GM12878 (cell line): ENCODE measurements at regions of chrX and their contacts with region 1.

Region 1: DNA sequence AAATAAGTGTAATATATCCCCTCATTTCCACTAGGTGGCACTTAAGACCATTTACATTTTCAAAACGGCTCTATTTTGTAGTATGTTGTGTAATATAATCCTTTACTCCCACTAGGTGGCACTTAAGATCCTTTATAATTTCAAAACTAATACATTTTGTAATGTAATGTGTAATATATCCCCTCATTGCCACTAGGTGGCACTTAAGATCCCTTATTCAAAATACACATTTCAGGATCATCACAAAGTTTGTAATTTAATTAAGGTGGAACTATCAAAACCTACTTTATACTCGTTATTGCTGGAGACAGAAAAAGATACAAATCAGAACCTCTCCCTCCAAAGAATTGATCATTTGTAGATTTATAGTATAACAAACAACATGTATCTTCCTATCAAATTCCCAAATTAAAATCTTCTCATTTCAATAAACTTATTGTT is 132.5 kb downstream of the ARHGAP6 start:
- DNase-seq: peak; percentile 61
- ATAC-seq: peak; percentile 93
- H3K4me3 ChIP-seq: no peak overlapping the region
- H3K27ac ChIP-seq: no peak overlapping the region
- H3K4me1 ChIP-seq: no peaks in the 10 kb centered on the region
- H3K27me3 ChIP-seq: no peaks in the 10 kb centered on the region
- CTCF ChIP-seq: peak; percentile 41 to 98 (median 83); a peak in 4 of 6 replicates
- EP300 ChIP-seq: no peak
- POLR2A ChIP-seq: no peak
- RAD21 ChIP-seq: peak; percentile 72

Region 2: DNA sequence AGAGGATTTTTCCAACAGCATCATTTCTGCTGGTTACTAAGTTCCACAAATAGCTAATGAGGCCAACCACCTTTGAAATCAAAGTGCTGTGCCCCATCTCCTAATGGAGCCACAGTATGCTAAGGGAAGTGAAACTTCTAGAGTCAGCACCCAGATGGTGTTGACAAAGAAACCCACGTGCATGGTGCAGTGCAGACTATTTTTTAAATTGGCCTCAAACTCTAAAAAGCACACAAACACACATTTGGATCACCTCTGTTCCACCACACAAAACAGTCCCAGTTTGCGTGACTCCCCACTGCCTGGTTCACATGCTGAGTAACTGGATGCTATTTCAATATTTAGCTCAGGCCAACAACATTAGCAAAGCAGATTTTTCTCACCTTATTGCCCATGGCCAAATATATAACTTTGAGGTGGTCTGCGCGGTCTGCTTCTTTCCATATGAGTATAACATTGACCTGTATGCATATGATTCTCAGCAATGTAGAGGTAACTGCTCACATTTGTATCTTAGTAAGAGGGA is 170.1 kb before region 1 on chrX:
- CTCF ChIA-PET with region 1: interaction called, 12 read pairs
- POLR2A ChIA-PET with region 1: no interaction called
- RAD21 ChIA-PET with region 1: no interaction called
- SMC1A ChIA-PET with region 1: no interaction called
- in situ Hi-C with region 1: no loop called
- intact Hi-C with region 1: no loop called
- DNase-seq: peak; percentile 67
- ATAC-seq: peak; percentile 99
- H3K4me3 ChIP-seq: no peak overlapping the region
- H3K27ac ChIP-seq: peak overlapping the region; percentile 22; the same call in 1 of the 2 replicates
- H3K4me1 ChIP-seq: no peaks in the 10 kb centered on the region
- H3K27me3 ChIP-seq: no peaks in the 10 kb centered on the region
- CTCF ChIP-seq: no peak; a peak in 1 of 6 replicates
- EP300 ChIP-seq: peak; percentile 79 to 91
- POLR2A ChIP-seq: no peak
- RAD21 ChIP-seq: no peak

Region 3: DNA sequence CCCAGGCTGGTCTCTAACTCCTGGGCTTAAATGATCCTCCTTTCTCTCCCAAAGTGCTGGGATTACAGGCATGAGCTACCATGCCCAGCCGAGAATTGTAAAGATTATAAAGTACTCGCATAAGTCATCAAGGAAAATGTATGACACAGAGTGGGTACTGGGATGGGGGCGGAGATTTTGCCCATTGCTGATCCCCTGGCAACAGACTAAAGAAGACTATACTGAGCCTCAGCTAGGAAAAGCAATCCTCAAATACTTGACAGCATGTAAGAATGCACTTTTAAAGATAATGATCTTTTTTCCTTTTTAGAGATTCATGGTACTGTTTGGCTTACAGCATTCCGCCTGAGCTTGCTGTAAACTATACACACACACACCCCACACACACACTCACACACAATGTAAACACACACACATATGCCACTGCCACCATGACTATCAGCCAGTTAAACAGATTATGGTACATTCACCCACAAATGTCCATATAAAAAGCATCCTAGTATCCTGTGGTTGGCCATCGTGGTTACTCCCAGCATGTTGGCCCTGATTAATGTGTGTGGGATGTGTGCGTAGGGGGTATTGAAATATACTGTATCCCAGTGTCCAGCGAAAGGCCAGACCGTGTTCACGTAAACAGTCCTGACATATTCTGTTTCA is 127.0 kb before region 1 on chrX:
- CTCF ChIA-PET with region 1: no interaction called
- POLR2A ChIA-PET with region 1: no interaction called
- RAD21 ChIA-PET with region 1: no interaction called
- SMC1A ChIA-PET with region 1: no interaction called
- in situ Hi-C with region 1: no loop called
- intact Hi-C with region 1: no loop called
- DNase-seq: no peak
- ATAC-seq: no peak
- H3K4me3 ChIP-seq: no peak overlapping the region
- H3K27ac ChIP-seq: no peak overlapping the region
- H3K4me1 ChIP-seq: no peaks in the 10 kb centered on the region
- H3K27me3 ChIP-seq: no peaks in the 10 kb centered on the region
- CTCF ChIP-seq: no peak
- EP300 ChIP-seq: no peak
- POLR2A ChIP-seq: no peak
- RAD21 ChIP-seq: no peak

Region 4: GRCh38 chrX:11724122-11725017 is 191.1 kb after region 1 on chrX:
- CTCF ChIA-PET with region 1: interaction called, 14 read pairs
- POLR2A ChIA-PET with region 1: no interaction called
- RAD21 ChIA-PET with region 1: interaction called, 4 read pairs
- SMC1A ChIA-PET with region 1: interaction called, 6 read pairs
- in situ Hi-C with region 1: no loop called
- intact Hi-C with region 1: loop called (anchors 1 kb)
- DNase-seq: no peak
- ATAC-seq: peak; percentile 85
- H3K4me3 ChIP-seq: no peak overlapping the region
- H3K27ac ChIP-seq: no peak overlapping the region
- H3K4me1 ChIP-seq: no peaks in the 10 kb centered on the region
- H3K27me3 ChIP-seq: no peaks in the 10 kb centered on the region
- CTCF ChIP-seq: peak; percentile 63 to 68 (median 64)
- EP300 ChIP-seq: no peak
- POLR2A ChIP-seq: no peak
- RAD21 ChIP-seq: peak; percentile 64

Region 5: GRCh38 chrX:11787564-11787963 is 254.3 kb after region 1 on chrX:
- CTCF ChIA-PET with region 1: interaction called, 12 read pairs
- POLR2A ChIA-PET with region 1: no interaction called
- RAD21 ChIA-PET with region 1: interaction called, 6 read pairs
- SMC1A ChIA-PET with region 1: no interaction called
- in situ Hi-C with region 1: no loop called
- intact Hi-C with region 1: no loop called
- DNase-seq: no peak
- ATAC-seq: no peak
- H3K4me3 ChIP-seq: no peak overlapping the region
- H3K27ac ChIP-seq: no peak overlapping the region
- H3K4me1 ChIP-seq: peaks cover 20% of the 10 kb centered on the region
- H3K27me3 ChIP-seq: no peaks in the 10 kb centered on the region
- CTCF ChIP-seq: peak; percentile 22 to 60 (median 33); a peak in 5 of 6 replicates
- EP300 ChIP-seq: no peak
- POLR2A ChIP-seq: no peak
- RAD21 ChIP-seq: peak; percentile 46

Region 6: DNA sequence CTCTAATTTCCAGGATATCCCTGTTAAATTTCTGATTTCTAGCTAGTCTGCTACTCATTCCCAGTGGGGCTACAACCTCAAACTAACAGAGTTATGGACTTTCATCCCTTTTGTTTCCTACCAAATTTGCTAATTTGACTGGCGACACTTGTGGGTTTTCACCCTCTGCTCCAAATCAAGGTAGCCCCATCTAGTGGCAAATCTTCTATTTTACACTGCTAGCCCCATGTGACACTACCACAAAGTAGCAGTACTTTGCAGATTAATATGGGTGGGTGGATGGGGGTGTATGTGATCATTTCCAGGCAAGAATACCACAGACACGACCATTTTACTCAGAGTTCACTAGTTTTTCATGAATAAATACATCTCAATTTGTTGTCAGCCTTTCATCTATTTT is 375.1 kb after region 1 on chrX:
- CTCF ChIA-PET with region 1: interaction called, 8 read pairs
- POLR2A ChIA-PET with region 1: no interaction called
- RAD21 ChIA-PET with region 1: interaction called, 3 read pairs
- SMC1A ChIA-PET with region 1: interaction called, 12 read pairs
- in situ Hi-C with region 1: loop called (anchors 5 kb)
- intact Hi-C with region 1: loop called (anchors 1 kb)
- DNase-seq: peak; percentile 25
- ATAC-seq: peak; percentile 99
- H3K4me3 ChIP-seq: no peak overlapping the region
- H3K27ac ChIP-seq: no peak overlapping the region
- H3K4me1 ChIP-seq: no peaks in the 10 kb centered on the region
- H3K27me3 ChIP-seq: no peaks in the 10 kb centered on the region
- CTCF ChIP-seq: peak; percentile 54 to 70 (median 56)
- EP300 ChIP-seq: no peak
- POLR2A ChIP-seq: no peak
- RAD21 ChIP-seq: peak; percentile 71

Region 7: GRCh38 chrX:12383196-12383595 is 850.0 kb after region 1 on chrX:
- CTCF ChIA-PET with region 1: no interaction called
- POLR2A ChIA-PET with region 1: no interaction called
- RAD21 ChIA-PET with region 1: no interaction called
- SMC1A ChIA-PET with region 1: no interaction called
- in situ Hi-C with region 1: no loop called
- intact Hi-C with region 1: loop called (anchors 5 kb)
- DNase-seq: no peak
- ATAC-seq: peak; percentile 45; the same call in 1 of the 3 replicates
- H3K4me3 ChIP-seq: no peak overlapping the region
- H3K27ac ChIP-seq: no peak overlapping the region
- H3K4me1 ChIP-seq: no peaks in the 10 kb centered on the region
- H3K27me3 ChIP-seq: peaks cover 0 to 2% of the 10 kb centered on the region in 2 experiments; a peak in 1 of 4 replicates
- CTCF ChIP-seq: peak; percentile 13 to 45 (median 40); a peak in 5 of 6 replicates
- EP300 ChIP-seq: no peak
- POLR2A ChIP-seq: no peak
- RAD21 ChIP-seq: no peak

Region 8: GRCh38 chrX:12771445-12772069 is 1238.3 kb after region 1 on chrX:
- CTCF ChIA-PET with region 1: interaction called, 14 read pairs
- POLR2A ChIA-PET with region 1: no interaction called
- RAD21 ChIA-PET with region 1: interaction called, 3 read pairs
- SMC1A ChIA-PET with region 1: interaction called, 8 read pairs
- in situ Hi-C with region 1: loop called (anchors 5 kb)
- intact Hi-C with region 1: no loop called
- DNase-seq: peak; percentile 20
- ATAC-seq: peak; percentile 100
- H3K4me3 ChIP-seq: no peak overlapping the region
- H3K27ac ChIP-seq: no peak overlapping the region
- H3K4me1 ChIP-seq: no peaks in the 10 kb centered on the region
- H3K27me3 ChIP-seq: peaks cover 0 to 8% of the 10 kb centered on the region in 2 experiments; a peak in 2 of 4 replicates
- CTCF ChIP-seq: peak; percentile 94 to 97 (median 94)
- EP300 ChIP-seq: no peak
- POLR2A ChIP-seq: no peak
- RAD21 ChIP-seq: peak; percentile 46; the same call in 1 of the 2 replicates